K562 (cell line): ENCODE measurements at regions of chr3 and their contacts with region 1.

Region 1: DNA sequence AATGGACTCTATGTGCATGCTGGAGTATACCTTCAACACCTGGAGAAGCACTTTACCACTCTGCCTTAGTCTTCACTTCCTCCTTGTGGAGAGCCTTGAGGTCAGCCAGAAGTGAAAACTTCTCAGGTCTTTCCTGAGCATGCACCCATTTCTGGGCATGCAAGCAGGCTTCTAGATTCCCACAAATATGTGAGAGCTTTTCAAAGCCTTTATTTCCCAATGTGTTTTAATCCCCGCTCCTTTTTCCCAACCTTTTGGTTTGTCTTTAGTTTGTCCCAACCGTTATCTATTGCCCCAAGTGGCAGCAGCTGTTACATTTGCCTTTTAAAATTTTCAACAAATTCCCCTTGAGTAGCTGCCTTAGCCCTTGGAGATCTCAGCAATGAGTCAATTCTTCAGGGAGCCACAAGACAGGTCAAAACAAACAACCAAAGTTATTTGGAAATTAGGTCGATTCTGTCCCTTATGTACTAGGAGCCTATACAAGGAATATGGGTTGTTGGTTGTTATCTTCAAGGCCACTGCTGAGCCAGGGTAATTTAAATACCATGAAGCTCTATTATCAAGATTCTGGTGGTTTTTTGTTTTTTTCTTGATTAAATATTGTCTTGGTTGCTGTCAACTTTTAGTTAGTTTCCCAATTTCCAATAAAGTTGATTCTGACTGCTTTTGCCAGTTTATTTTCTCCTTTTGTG is 44.4 kb downstream of the LSM3 start:
- DNase-seq: peak in 1 of 4 experiments; percentile 56
- ATAC-seq: peak; percentile 78
- H3K4me3 ChIP-seq: no peak overlapping the region
- H3K27ac ChIP-seq: peak overlapping the region; percentile 62
- H3K4me1 ChIP-seq: peaks cover 12 to 29% of the 10 kb centered on the region in 2 experiments; a peak in 4 of 5 replicates
- H3K27me3 ChIP-seq: no peaks in the 10 kb centered on the region
- CTCF ChIP-seq: peak in 2 of 3 experiments; percentile 15 to 17; a peak in 1 of 6 replicates
- EP300 ChIP-seq: no peak
- POLR2A ChIP-seq: no peak
- RAD21 ChIP-seq: peak; percentile 12 to 16; a peak in 2 of 4 replicates

Region 2: GRCh38 chr3:14210843-14211594 is 12.0 kb before region 1 on chr3:
- CTCF ChIA-PET with region 1: no interaction called
- POLR2A ChIA-PET with region 1: interaction called, 22 read pairs
- in situ Hi-C with region 1: no loop called
- intact Hi-C with region 1: no loop called
- DNase-seq: no peak
- ATAC-seq: no peak
- H3K4me3 ChIP-seq: no peak overlapping the region
- H3K27ac ChIP-seq: peak overlapping the region; percentile 18; the same call in 1 of the 3 replicates
- H3K4me1 ChIP-seq: peaks cover 32 to 61% of the 10 kb centered on the region in 2 experiments
- H3K27me3 ChIP-seq: no peaks in the 10 kb centered on the region
- CTCF ChIP-seq: no peak
- EP300 ChIP-seq: no peak; the same call in 1 of the 2 replicates
- POLR2A ChIP-seq: no peak
- RAD21 ChIP-seq: no peak